Activated T-helper 2 cell treated with anti-CD3 and anti-CD28 coated beads, Interferon-gamma antibody, Interleukin-2, Interleukin-4, amounts not matched to agents 10 μg/mL and 5 μg/mL and 100 μg/mL, durations not matched to agents 14 hours and 24 hours and 36 hours (primary cell): ENCODE measurements at regions of chr10 and their contacts with region 1.

Region 1: GRCh38 chr10:62183442-62183841 is 85.2 kb downstream of the RTKN2 start:
- DNase-seq: peak; percentile 52
- H3K4me3 Mint-ChIP-seq: no peak overlapping the region
- H3K27ac Mint-ChIP-seq: peak overlapping the region; percentile 96
- H3K4me1 Mint-ChIP-seq: peaks cover 76% of the 10 kb centered on the region
- H3K27me3 Mint-ChIP-seq: no peaks in the 10 kb centered on the region

Region 2: DNA sequence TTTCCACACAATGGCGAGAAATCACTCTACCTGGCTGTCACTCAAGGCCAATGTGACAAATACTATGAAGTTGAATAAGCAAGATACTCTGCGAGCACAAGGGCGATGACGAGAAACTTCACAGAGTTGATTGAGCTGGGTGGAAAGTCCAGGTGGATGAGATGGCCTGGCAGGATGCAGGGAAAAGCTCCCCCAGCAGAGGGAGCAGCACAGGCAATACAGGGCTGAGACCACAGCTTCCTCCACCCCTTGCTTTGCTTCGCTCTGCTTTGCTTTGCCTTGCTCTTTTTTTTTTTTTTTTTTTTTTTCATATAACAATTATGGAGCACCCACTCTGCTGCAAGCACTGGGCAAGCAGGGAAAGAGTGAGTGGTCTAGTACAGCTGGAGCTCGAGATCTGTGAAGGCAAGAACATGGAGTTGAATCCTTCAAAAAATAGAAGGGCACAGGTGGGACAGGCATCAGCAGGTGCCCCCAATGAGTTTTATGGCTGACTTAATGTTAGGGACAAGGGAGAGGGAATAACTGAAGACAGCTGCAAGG is 432.4 kb before region 1 on chr10:
- intact Hi-C with region 1: loop called (anchors 2 kb)
- DNase-seq: peak; percentile 63
- H3K4me3 Mint-ChIP-seq: peak overlapping the region; percentile 40
- H3K27ac Mint-ChIP-seq: peak overlapping the region; percentile 71
- H3K4me1 Mint-ChIP-seq: peaks cover 40% of the 10 kb centered on the region
- H3K27me3 Mint-ChIP-seq: no peaks in the 10 kb centered on the region

Region 3: GRCh38 chr10:61943674-61944410 is 239.6 kb before region 1 on chr10:
- intact Hi-C with region 1: loop called (anchors 1 kb)
- DNase-seq: no peak
- H3K4me3 Mint-ChIP-seq: peak overlapping the region; percentile 47
- H3K27ac Mint-ChIP-seq: peak overlapping the region; percentile 93
- H3K4me1 Mint-ChIP-seq: peaks cover 47% of the 10 kb centered on the region
- H3K27me3 Mint-ChIP-seq: no peaks in the 10 kb centered on the region

Region 4: DNA sequence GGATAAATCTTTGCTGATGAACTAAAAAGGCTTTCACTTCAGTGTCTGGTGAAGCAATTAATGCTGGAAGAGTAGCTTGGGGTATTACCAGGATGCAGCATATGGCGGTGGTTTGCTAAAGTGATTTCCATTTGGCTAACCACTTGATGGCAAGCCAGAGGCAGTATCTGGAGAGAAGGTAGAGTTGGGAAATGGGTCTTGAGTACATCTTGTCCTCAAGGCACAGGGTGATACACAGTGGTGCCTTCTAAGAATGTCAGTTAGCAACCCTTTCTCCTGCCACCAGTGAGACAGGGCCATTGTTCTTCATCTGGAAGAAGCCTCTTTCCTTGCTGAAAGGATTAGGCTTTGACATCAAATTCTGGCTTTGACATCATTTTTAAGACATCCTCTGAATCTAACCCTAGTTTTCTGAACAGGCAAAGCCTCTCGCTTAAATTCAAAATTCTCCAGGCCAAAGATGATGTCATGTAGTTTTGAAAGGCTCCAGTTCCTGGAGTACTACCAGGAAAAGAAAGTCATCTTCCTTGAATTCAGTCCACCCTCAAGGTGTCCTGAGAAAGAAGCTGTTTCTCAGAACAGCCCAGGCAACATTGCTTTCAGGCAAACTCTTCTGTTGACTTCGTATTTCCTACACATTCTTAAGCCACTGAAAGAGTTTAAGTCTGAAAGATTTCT is 119.5 kb before region 1 on chr10:
- intact Hi-C with region 1: loop called (anchors 1 kb)
- DNase-seq: no peak
- H3K4me3 Mint-ChIP-seq: peak overlapping the region; percentile 39
- H3K27ac Mint-ChIP-seq: peak overlapping the region; percentile 87
- H3K4me1 Mint-ChIP-seq: peaks cover 72% of the 10 kb centered on the region
- H3K27me3 Mint-ChIP-seq: no peaks in the 10 kb centered on the region

Region 5: GRCh38 chr10:62159351-62159750 is 24.1 kb before region 1 on chr10:
- intact Hi-C with region 1: no loop called
- DNase-seq: no peak
- H3K4me3 Mint-ChIP-seq: no peak overlapping the region
- H3K27ac Mint-ChIP-seq: no peak overlapping the region
- H3K4me1 Mint-ChIP-seq: peaks cover 11% of the 10 kb centered on the region
- H3K27me3 Mint-ChIP-seq: no peaks in the 10 kb centered on the region

Region 6: GRCh38 chr10:62224606-62225005 is 41.2 kb after region 1 on chr10:
- intact Hi-C with region 1: loop called (anchors 1 kb)
- DNase-seq: no peak
- H3K4me3 Mint-ChIP-seq: no peak overlapping the region
- H3K27ac Mint-ChIP-seq: no peak overlapping the region
- H3K4me1 Mint-ChIP-seq: peaks cover 9% of the 10 kb centered on the region
- H3K27me3 Mint-ChIP-seq: no peaks in the 10 kb centered on the region

Region 7: GRCh38 chr10:62726142-62726541 is 542.7 kb after region 1 on chr10:
- intact Hi-C with region 1: loop called (anchors 10 kb)
- DNase-seq: no peak
- H3K4me3 Mint-ChIP-seq: no peak overlapping the region
- H3K27ac Mint-ChIP-seq: peak overlapping the region; percentile 27
- H3K4me1 Mint-ChIP-seq: peaks cover 54% of the 10 kb centered on the region
- H3K27me3 Mint-ChIP-seq: no peaks in the 10 kb centered on the region